Transverse colon (tissue), 4 donors: ENCODE measurements at regions of chr2 and their contacts with region 1.

Region 1: GRCh38 chr2:30711646-30712085 is 95.6 kb downstream of the CAPN13 start:
- DNase-seq: peak; percentile 89
- H3K4me3 ChIP-seq: no peak overlapping the region
- H3K27ac ChIP-seq: no peak overlapping the region
- H3K4me1 ChIP-seq: peaks cover 0 to 6% (median 1%) of the 10 kb centered on the region in 4 donors
- H3K27me3 ChIP-seq: no peaks in the 10 kb centered on the region
- CTCF ChIP-seq: peak; percentile 96 to 100 (median 99)
- EP300 ChIP-seq: no peak
- POLR2A ChIP-seq: no peak

Region 2: DNA sequence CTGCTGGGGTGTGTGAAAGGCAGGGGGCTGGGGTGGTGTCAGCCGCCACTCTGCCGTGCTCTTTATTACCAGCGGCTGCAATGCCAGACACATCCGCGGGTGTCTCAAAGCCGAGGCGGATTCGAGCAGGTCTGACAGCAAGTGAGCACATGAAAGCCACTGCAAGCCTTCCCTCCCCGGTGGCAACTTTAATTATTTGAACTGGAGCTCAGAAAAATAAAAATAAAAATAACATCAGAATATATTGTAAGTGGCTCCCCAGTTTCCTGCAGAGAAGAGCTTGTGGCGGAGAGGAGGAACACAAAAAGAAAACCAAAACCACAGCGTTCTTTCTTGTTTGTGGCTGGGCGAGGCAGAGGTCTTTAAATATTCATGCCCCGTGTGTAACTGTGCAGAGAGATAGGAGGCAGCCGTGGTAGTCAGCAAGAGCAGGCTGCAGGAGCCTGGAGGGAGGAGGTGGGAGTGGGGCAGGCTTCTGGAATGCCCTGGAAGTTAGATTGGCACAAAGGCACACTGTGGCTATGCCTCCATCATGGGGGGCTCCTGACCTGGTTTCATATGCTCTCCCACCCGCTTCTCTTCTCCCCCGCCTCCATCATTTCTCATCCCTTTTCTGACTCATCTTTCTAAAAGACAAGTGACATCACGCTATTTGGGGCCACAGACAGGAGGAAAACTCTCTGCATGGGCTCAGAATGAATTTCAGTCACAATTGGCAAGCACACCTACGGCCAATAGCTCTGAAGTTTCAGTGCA is 1396.7 kb before region 1 on chr2:
- in situ Hi-C with region 1: no loop called
- intact Hi-C with region 1: loop called (anchors 5 kb)
- DNase-seq: peak; percentile 20
- H3K4me3 ChIP-seq: peak overlapping the region in 1 of 4 donors; percentile 23
- H3K27ac ChIP-seq: no peak overlapping the region
- H3K4me1 ChIP-seq: no peaks in the 10 kb centered on the region
- H3K27me3 ChIP-seq: no peaks in the 10 kb centered on the region
- CTCF ChIP-seq: no peak
- EP300 ChIP-seq: no peak
- POLR2A ChIP-seq: no peak

Region 3: DNA sequence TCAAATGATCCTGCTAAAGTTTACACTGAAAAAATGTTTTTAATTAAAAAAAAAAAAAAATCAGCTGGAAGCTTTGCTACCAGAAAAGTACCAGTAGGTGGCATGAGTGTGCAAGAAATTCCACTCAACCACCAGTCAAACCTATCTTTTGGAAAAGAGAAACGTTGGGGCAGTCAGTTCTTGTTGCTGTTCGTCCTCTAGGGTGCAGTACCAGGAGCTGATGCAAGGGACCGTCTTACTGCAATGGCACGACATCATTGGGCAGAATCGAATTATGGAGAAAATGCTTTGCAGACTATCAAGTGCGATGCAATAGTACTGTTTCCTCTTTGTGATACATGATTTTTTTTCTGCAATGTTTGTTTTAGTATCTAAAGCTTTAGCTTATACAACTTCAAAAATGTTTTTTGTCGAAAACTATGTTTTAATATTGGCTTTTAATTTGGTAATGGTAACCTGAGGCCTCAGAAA is 546.6 kb before region 1 on chr2:
- in situ Hi-C with region 1: loop called in 1 of 4 experiments (anchors 10 kb)
- intact Hi-C with region 1: no loop called
- DNase-seq: peak; percentile 46
- H3K4me3 ChIP-seq: no peak overlapping the region
- H3K27ac ChIP-seq: no peak overlapping the region
- H3K4me1 ChIP-seq: peaks cover 0 to 13% (median 2%) of the 10 kb centered on the region in 4 donors
- H3K27me3 ChIP-seq: no peaks in the 10 kb centered on the region
- CTCF ChIP-seq: peak; percentile 84 to 94 (median 87)
- EP300 ChIP-seq: no peak
- POLR2A ChIP-seq: no peak

Region 4: GRCh38 chr2:30201990-30202389 is 509.7 kb before region 1 on chr2:
- in situ Hi-C with region 1: loop called (anchors 5 to 10 kb)
- intact Hi-C with region 1: no loop called
- DNase-seq: no peak
- H3K4me3 ChIP-seq: no peak overlapping the region
- H3K27ac ChIP-seq: peak overlapping the region in 3 of 4 donors; percentile 21 to 50 (median 22)
- H3K4me1 ChIP-seq: peaks cover 0 to 10% (median 3%) of the 10 kb centered on the region in 4 donors
- H3K27me3 ChIP-seq: no peaks in the 10 kb centered on the region
- CTCF ChIP-seq: no peak
- EP300 ChIP-seq: no peak
- POLR2A ChIP-seq: no peak

Region 5: GRCh38 chr2:30208452-30208851 is 503.2 kb before region 1 on chr2:
- in situ Hi-C with region 1: loop called (anchors 5 to 10 kb)
- intact Hi-C with region 1: loop called (anchors 2 kb)
- DNase-seq: peak; percentile 64
- H3K4me3 ChIP-seq: no peak overlapping the region
- H3K27ac ChIP-seq: no peak overlapping the region
- H3K4me1 ChIP-seq: peaks cover 0 to 4% (median 4%) of the 10 kb centered on the region in 4 donors
- H3K27me3 ChIP-seq: no peaks in the 10 kb centered on the region
- CTCF ChIP-seq: peak; percentile 87 to 92 (median 90)
- EP300 ChIP-seq: no peak
- POLR2A ChIP-seq: no peak

Region 6: DNA sequence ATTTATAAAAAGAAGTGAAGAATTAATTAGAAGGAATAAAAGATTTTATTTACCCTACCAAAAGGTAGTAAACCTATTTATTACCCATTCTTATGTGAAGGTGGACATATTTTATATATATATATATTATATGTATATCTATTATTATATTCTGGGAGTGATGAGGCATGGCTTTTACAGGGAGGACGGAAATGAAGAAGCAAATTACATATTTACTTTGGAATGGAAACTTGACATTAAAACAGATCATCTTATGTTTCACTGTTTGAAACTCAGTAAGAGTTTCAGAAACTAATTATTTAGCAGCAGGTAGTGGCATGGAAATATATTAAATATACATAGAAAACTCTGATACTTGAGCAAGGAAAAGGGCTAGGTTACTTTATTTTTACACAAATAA is 121.3 kb before region 1 on chr2:
- in situ Hi-C with region 1: no loop called
- intact Hi-C with region 1: no loop called
- DNase-seq: no peak
- H3K4me3 ChIP-seq: no peak overlapping the region
- H3K27ac ChIP-seq: no peak overlapping the region
- H3K4me1 ChIP-seq: no peaks in the 10 kb centered on the region
- H3K27me3 ChIP-seq: no peaks in the 10 kb centered on the region
- CTCF ChIP-seq: no peak
- EP300 ChIP-seq: no peak
- POLR2A ChIP-seq: no peak

Region 7: DNA sequence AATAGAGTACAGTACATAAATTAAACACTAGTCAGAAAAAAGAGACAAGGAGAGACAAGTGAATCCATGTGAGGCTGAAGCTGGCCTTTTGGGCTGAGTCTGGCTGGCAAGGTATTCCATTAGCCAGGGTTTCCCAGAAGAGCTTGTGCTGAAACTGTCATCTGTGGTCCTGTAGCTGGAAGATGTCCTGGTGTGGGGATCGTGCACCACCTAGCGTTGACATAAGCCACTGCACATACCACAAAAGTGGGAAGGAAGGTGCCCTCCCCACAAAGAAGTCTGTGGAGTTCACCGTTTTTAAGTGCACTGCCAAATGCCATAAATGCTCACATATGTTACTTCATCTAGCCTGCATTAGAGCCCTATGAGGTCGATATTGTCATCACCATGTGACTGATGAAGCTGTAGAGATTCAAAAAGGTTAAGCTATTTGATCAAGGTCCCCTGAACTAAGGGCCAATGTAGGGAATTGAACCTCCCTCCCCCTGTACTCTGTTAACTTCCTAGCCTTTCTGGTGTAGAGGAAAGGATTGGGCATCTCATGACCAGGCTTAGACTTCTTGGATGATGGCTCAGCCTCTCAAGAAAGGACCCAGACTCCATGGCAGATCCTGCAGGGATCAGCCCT is 458.5 kb after region 1 on chr2:
- in situ Hi-C with region 1: loop called in 3 of 4 experiments (anchors 10 kb)
- intact Hi-C with region 1: loop called (anchors 5 kb)
- DNase-seq: peak; percentile 47
- H3K4me3 ChIP-seq: no peak overlapping the region
- H3K27ac ChIP-seq: no peak overlapping the region
- H3K4me1 ChIP-seq: no peaks in the 10 kb centered on the region
- H3K27me3 ChIP-seq: no peaks in the 10 kb centered on the region
- CTCF ChIP-seq: peak; percentile 80 to 88 (median 85)
- EP300 ChIP-seq: no peak
- POLR2A ChIP-seq: no peak

Region 8: GRCh38 chr2:31333527-31334183 is 622.0 kb after region 1 on chr2:
- in situ Hi-C with region 1: loop called in 2 of 4 experiments (anchors 5 to 25 kb)
- intact Hi-C with region 1: loop called (anchors 2 kb)
- DNase-seq: peak; percentile 83
- H3K4me3 ChIP-seq: no peak overlapping the region
- H3K27ac ChIP-seq: no peak overlapping the region
- H3K4me1 ChIP-seq: no peaks in the 10 kb centered on the region
- H3K27me3 ChIP-seq: no peaks in the 10 kb centered on the region
- CTCF ChIP-seq: peak; percentile 83 to 90 (median 84)
- EP300 ChIP-seq: no peak
- POLR2A ChIP-seq: no peak